MCF 10A (cell line): ENCODE measurements at regions of chr4 and their contacts with region 1.

Region 1: GRCh38 chr4:99816545-99817308 is at the start of gene DAPP1:
- DNase-seq: peak; percentile 92
- H3K4me3 Mint-ChIP-seq: peak within 1 kb of the TSS; percentile 72
- H3K27ac Mint-ChIP-seq: peak within 1 kb of the TSS; percentile 11
- H3K4me1 Mint-ChIP-seq: peaks cover 36% of the 10 kb centered on the region
- H3K27me3 Mint-ChIP-seq: no peaks in the 10 kb centered on the region
- CTCF ChIP-seq: no peak
- total RNA-seq, gene DAPP1: 17.6 and 24.7 TPM in 2 replicates

Region 2: DNA sequence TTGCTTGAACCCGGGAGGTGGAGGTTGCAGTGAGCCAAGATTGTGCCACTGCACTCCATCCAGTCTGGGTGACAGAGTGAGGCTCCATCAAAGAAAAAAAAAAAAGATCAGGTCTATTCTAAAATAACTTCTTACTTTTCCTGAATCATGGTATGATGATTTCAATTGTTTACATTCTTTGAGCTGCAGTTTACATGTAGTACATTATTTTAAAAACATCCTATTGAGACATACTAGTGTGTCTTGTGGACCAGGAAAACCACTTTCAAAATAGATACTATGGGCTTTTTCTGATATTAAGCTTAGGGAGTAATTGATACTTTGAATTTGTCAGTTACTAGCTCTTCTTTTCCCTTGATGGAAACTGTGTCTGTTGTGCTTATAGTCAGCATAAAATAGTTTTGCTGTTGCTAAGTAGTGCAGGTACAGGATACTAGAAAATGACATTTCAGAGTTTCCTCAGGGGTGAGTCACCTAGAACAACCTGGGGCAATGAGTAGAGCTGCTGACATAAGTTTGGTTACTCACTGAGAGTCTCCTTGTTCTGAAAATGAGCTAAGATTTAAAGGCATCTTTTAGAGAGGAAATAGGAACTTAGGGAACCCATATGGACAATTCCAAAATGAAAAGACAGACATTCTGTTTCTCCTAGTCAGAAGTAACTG is 105.9 kb before region 1 on chr4:
- CTCF ChIA-PET with region 1: interaction called, 3 read pairs
- POLR2A ChIA-PET with region 1: interaction called, 11 read pairs
- intact Hi-C with region 1: no loop called
- DNase-seq: peak; percentile 82
- H3K4me3 Mint-ChIP-seq: no peak overlapping the region
- H3K27ac Mint-ChIP-seq: peak overlapping the region; percentile 24
- H3K4me1 Mint-ChIP-seq: peaks cover 14% of the 10 kb centered on the region
- H3K27me3 Mint-ChIP-seq: no peaks in the 10 kb centered on the region
- CTCF ChIP-seq: no peak

Region 3: DNA sequence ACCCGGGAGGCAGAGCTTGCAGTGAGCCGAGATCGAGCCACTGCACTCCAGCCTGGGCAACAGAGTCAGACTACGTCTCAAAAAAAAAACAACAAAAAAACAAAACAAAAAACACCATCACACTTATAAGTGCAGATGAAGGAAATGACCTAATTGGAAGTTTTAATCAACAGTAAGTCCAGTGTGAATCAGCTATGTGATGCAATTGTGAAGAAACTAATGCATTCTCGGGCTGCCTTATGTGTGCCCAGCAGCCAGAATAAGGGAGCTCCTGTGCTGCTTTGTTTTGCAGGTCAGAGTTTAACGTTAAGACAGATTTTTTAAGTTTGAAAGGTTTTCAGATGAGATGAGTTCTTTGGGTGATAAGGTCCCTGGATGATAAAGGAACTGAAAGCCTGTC is 10.7 kb after region 1 on chr4:
- CTCF ChIA-PET with region 1: interaction called, 6 read pairs
- POLR2A ChIA-PET with region 1: interaction called, 23 read pairs
- intact Hi-C with region 1: no loop called
- DNase-seq: peak; percentile 61
- H3K4me3 Mint-ChIP-seq: no peak overlapping the region
- H3K27ac Mint-ChIP-seq: no peak overlapping the region
- H3K4me1 Mint-ChIP-seq: peaks cover 18% of the 10 kb centered on the region
- H3K27me3 Mint-ChIP-seq: no peaks in the 10 kb centered on the region
- CTCF ChIP-seq: no peak

Region 4: GRCh38 chr4:99885063-99885664 is 68.4 kb after region 1 on chr4:
- CTCF ChIA-PET with region 1: interaction called, 16 read pairs
- POLR2A ChIA-PET with region 1: no interaction called
- intact Hi-C with region 1: loop called (anchors 1 kb)
- DNase-seq: peak; percentile 64
- H3K4me3 Mint-ChIP-seq: no peak overlapping the region
- H3K27ac Mint-ChIP-seq: no peak overlapping the region
- H3K4me1 Mint-ChIP-seq: peaks cover 5% of the 10 kb centered on the region
- H3K27me3 Mint-ChIP-seq: no peaks in the 10 kb centered on the region
- CTCF ChIP-seq: peak; percentile 39